ENCODE measurements at regions of chrX and their contacts with region 1.

Region 1: DNA sequence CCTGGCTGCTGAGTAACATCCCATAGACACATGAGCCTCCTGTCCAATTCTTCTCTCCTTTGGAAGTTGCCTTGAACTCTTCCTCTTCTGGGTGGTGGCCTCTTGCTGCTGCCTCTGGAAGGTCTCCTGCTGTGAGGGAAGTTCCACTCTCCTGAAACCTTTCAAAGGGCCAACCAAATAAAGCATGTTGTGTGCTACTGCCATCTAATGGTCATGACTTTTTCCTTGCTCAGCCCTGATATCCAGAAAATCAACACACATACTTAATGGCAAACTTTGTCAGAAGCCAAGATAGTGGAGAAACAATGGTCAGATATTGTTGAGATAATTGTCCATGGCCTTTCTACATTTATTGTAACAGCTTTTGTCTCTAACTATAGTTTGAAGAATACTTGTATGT is 19.1 kb upstream of the ZXDA start:
- DNase-seq: peak; percentile 24
- ATAC-seq: no peak
- H3K4me3 ChIP-seq: no peak overlapping the region
- H3K4me3 Mint-ChIP-seq: no peak overlapping the region
- H3K27ac ChIP-seq: no peak overlapping the region
- H3K27ac Mint-ChIP-seq: no peak overlapping the region
- H3K4me1 ChIP-seq: no peaks in the 10 kb centered on the region
- H3K4me1 Mint-ChIP-seq: peaks cover 2% of the 10 kb centered on the region
- H3K27me3 ChIP-seq: no peaks in the 10 kb centered on the region
- H3K27me3 Mint-ChIP-seq: no peaks in the 10 kb centered on the region
- CTCF ChIP-seq: peak; percentile 29

Region 2: DNA sequence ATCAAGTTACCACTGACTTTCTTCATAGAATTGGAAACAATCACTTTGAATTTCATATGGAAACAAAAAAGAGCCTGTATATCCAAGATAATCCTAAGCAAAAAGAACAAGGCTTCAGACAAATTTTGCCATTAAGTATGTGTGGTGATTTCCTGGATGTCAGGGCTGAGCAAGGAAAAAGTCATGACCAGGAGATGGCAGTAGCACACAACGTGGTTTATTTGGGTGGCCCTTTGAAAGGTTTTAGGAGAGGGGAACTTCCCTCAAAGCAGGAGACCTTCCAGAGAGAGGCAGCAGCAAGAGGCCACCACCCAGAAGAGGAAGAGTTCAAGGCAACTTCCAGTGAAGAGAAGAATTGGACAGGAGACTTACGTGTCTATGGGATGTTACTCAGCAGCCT is 355.6 kb before region 1 on chrX:
- CTCF ChIA-PET with region 1: no interaction called
- POLR2A ChIA-PET with region 1: no interaction called
- intact Hi-C with region 1: loop called (anchors 5 kb)
- DNase-seq: peak; percentile 30
- ATAC-seq: no peak
- H3K4me3 ChIP-seq: no peak overlapping the region
- H3K4me3 Mint-ChIP-seq: no peak overlapping the region
- H3K27ac ChIP-seq: no peak overlapping the region
- H3K27ac Mint-ChIP-seq: no peak overlapping the region
- H3K4me1 ChIP-seq: no peaks in the 10 kb centered on the region
- H3K4me1 Mint-ChIP-seq: peaks cover 1% of the 10 kb centered on the region
- H3K27me3 ChIP-seq: no peaks in the 10 kb centered on the region
- H3K27me3 Mint-ChIP-seq: no peaks in the 10 kb centered on the region
- CTCF ChIP-seq: peak; percentile 25

Region 3: GRCh38 chrX:57741107-57741506 is 188.3 kb before region 1 on chrX:
- CTCF ChIA-PET with region 1: no interaction called
- POLR2A ChIA-PET with region 1: no interaction called
- intact Hi-C with region 1: no loop called
- DNase-seq: no peak
- ATAC-seq: no peak
- H3K4me3 ChIP-seq: no peak overlapping the region
- H3K4me3 Mint-ChIP-seq: no peak overlapping the region
- H3K27ac ChIP-seq: no peak overlapping the region
- H3K27ac Mint-ChIP-seq: no peak overlapping the region
- H3K4me1 ChIP-seq: no peaks in the 10 kb centered on the region
- H3K4me1 Mint-ChIP-seq: no peaks in the 10 kb centered on the region
- H3K27me3 ChIP-seq: no peaks in the 10 kb centered on the region
- H3K27me3 Mint-ChIP-seq: no peaks in the 10 kb centered on the region
- CTCF ChIP-seq: no peak

Region 4: DNA sequence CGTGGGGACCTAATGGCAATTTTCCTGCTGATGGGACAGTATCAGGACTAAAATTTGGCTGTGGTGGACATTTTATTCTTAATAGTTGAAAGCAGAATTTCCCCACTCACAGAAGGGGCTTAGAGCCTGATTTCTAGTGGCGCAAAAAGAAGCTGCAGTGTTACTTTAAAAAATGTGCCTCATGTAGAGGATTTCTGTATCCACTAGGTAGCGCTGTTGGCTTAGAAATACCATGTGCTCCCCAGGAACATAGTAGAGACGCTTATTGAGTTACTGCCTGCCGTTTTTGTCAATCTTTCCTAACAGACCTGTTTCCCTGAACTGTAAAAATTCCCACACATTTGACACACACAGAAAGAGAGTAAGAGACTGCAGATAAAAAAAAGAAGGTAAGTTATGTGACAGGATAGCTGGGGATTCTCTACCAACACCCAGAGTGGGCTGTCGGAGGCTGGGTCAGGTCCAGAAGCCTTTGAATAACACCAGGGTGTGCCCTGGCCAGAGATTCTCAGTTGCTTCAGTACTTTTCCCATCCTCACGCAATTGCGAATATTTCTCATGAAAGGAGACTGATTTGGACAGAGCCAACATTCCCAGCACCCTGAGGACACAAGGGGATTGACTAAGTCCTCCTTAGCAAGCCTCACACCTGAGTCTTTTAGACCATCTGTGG is 107.5 kb before region 1 on chrX:
- CTCF ChIA-PET with region 1: interaction called, 10 read pairs
- POLR2A ChIA-PET with region 1: no interaction called
- intact Hi-C with region 1: loop called (anchors 2 kb)
- DNase-seq: peak; percentile 64
- ATAC-seq: peak; percentile 31
- H3K4me3 ChIP-seq: no peak overlapping the region
- H3K4me3 Mint-ChIP-seq: peak overlapping the region; percentile 2
- H3K27ac ChIP-seq: no peak overlapping the region
- H3K27ac Mint-ChIP-seq: no peak overlapping the region
- H3K4me1 ChIP-seq: no peaks in the 10 kb centered on the region
- H3K4me1 Mint-ChIP-seq: peaks cover 2% of the 10 kb centered on the region
- H3K27me3 ChIP-seq: no peaks in the 10 kb centered on the region
- H3K27me3 Mint-ChIP-seq: no peaks in the 10 kb centered on the region
- CTCF ChIP-seq: peak; percentile 68

Region 5: GRCh38 chrX:58025979-58026378 is 96.6 kb after region 1 on chrX:
- CTCF ChIA-PET with region 1: no interaction called
- POLR2A ChIA-PET with region 1: no interaction called
- intact Hi-C with region 1: loop called (anchors 10 kb)
- DNase-seq: peak; percentile 55
- ATAC-seq: no peak
- H3K4me3 ChIP-seq: no peak overlapping the region
- H3K4me3 Mint-ChIP-seq: no peak overlapping the region
- H3K27ac ChIP-seq: no peak overlapping the region
- H3K27ac Mint-ChIP-seq: no peak overlapping the region
- H3K4me1 ChIP-seq: no peaks in the 10 kb centered on the region
- H3K4me1 Mint-ChIP-seq: no peaks in the 10 kb centered on the region
- H3K27me3 ChIP-seq: no peaks in the 10 kb centered on the region
- H3K27me3 Mint-ChIP-seq: no peaks in the 10 kb centered on the region
- CTCF ChIP-seq: peak; percentile 61